ENCODE measurements at regions of chr5 and their contacts with region 1.

Region 1: DNA sequence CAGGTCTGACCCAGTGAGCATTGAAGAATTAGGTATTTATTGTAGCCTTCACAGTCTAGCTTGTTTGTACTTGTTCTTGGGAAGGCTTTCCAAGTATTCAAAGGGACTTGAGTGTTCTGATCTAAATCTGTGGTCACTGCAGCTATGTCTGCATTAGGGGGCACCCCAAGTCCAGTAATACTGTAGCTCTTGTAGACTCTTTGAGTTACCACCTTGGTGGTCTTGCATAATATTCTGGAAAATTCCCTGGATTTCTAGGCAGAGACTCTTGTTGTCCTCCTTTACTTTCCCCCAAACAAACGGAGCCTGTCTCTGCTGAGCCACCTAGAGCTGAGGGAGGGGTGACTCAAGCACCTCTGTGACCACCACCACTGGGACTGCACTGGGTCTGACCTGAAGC is 149.5 kb upstream of the DHFR start:
- DNase-seq: no peak
- H3K4me3 Mint-ChIP-seq: no peak overlapping the region
- H3K27ac Mint-ChIP-seq: no peak overlapping the region
- H3K4me1 Mint-ChIP-seq: no peaks in the 10 kb centered on the region
- H3K27me3 Mint-ChIP-seq: no peaks in the 10 kb centered on the region
- CTCF ChIP-seq: no peak

Region 2: GRCh38 chr5:79636981-79637733 is 1167.2 kb before region 1 on chr5:
- CTCF ChIA-PET with region 1: no interaction called
- intact Hi-C with region 1: no loop called
- DNase-seq: no peak
- H3K4me3 Mint-ChIP-seq: no peak overlapping the region
- H3K27ac Mint-ChIP-seq: no peak overlapping the region
- H3K4me1 Mint-ChIP-seq: no peaks in the 10 kb centered on the region
- H3K27me3 Mint-ChIP-seq: no peaks in the 10 kb centered on the region
- CTCF ChIP-seq: no peak

Region 3: GRCh38 chr5:80736730-80737129 is 67.6 kb before region 1 on chr5:
- CTCF ChIA-PET with region 1: no interaction called
- intact Hi-C with region 1: no loop called
- DNase-seq: peak; percentile 21
- H3K4me3 Mint-ChIP-seq: no peak overlapping the region
- H3K27ac Mint-ChIP-seq: no peak overlapping the region
- H3K4me1 Mint-ChIP-seq: peaks cover 5% of the 10 kb centered on the region
- H3K27me3 Mint-ChIP-seq: no peaks in the 10 kb centered on the region
- CTCF ChIP-seq: no peak

Region 4: GRCh38 chr5:80790698-80791097 is 13.6 kb before region 1 on chr5:
- CTCF ChIA-PET with region 1: no interaction called
- intact Hi-C with region 1: no loop called
- DNase-seq: no peak
- H3K4me3 Mint-ChIP-seq: no peak overlapping the region
- H3K27ac Mint-ChIP-seq: no peak overlapping the region
- H3K4me1 Mint-ChIP-seq: no peaks in the 10 kb centered on the region
- H3K27me3 Mint-ChIP-seq: no peaks in the 10 kb centered on the region
- CTCF ChIP-seq: no peak

Region 5: GRCh38 chr5:81105261-81105877 is 301.0 kb after region 1 on chr5:
- CTCF ChIA-PET with region 1: interaction called, 5 read pairs
- intact Hi-C with region 1: loop called (anchors 10 kb)
- DNase-seq: no peak
- H3K4me3 Mint-ChIP-seq: no peak overlapping the region
- H3K27ac Mint-ChIP-seq: no peak overlapping the region
- H3K4me1 Mint-ChIP-seq: no peaks in the 10 kb centered on the region
- H3K27me3 Mint-ChIP-seq: no peaks in the 10 kb centered on the region
- CTCF ChIP-seq: no peak

Measured in Calu3 (cell line).